Kidney (tissue), 22 donors: ENCODE measurements at regions of chr1 and their contacts with region 1.

Region 1: DNA sequence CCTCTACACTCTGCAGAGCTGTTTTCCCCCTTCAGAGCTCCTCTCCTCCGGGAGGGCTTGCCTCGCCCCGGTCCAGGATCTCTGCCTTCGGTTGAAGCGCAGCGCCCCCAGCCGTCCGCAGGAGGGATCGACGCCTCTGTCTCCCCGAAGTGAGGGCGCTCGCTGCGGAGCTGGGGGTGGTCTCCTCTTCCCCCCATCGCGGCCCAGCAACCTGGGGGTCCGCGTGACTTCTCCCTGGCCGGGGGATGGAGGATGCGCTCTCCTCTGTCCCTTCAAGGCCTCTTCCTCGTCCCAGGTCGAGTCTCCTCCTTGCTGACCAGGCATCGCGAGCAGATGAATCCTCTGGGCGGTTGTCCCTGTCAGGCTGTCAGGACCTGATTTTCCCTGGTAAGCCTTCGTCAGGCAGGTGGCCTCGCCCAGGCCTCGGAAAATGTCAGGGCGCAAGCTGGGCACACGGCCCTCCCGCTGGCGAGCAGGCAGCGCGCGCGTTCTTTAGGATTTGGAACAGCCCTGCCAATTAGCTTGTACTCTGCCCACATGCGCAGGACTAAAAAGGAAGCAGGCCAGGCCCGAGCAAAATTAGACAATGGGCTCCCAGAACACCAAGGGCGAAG is 90.5 kb downstream of the EDEM3 start:
- DNase-seq: peak; percentile 83 to 90 (median 85)
- H3K4me3 ChIP-seq: peak overlapping the region in 2 of 3 donors; percentile 27 to 50
- H3K27ac ChIP-seq: no peak overlapping the region
- H3K4me1 ChIP-seq: peaks cover 0 to 2% (median 0%) of the 10 kb centered on the region in 3 donors
- H3K27me3 ChIP-seq: no peaks in the 10 kb centered on the region
- CTCF ChIP-seq: peak; percentile 82

Region 2: GRCh38 chr1:184075055-184076029 is 588.8 kb before region 1 on chr1:
- intact Hi-C with region 1: loop called (anchors 10 kb)
- DNase-seq: peak in 2 of 5 donors; percentile 78 to 88
- H3K4me3 ChIP-seq: no peak overlapping the region
- H3K27ac ChIP-seq: no peak overlapping the region
- H3K4me1 ChIP-seq: peaks cover 0 to 4% (median 0%) of the 10 kb centered on the region in 3 donors
- H3K27me3 ChIP-seq: no peaks in the 10 kb centered on the region
- CTCF ChIP-seq: peak; percentile 85